ENCODE measurements at regions of chr7 and their contacts with region 1.

Region 1: DNA sequence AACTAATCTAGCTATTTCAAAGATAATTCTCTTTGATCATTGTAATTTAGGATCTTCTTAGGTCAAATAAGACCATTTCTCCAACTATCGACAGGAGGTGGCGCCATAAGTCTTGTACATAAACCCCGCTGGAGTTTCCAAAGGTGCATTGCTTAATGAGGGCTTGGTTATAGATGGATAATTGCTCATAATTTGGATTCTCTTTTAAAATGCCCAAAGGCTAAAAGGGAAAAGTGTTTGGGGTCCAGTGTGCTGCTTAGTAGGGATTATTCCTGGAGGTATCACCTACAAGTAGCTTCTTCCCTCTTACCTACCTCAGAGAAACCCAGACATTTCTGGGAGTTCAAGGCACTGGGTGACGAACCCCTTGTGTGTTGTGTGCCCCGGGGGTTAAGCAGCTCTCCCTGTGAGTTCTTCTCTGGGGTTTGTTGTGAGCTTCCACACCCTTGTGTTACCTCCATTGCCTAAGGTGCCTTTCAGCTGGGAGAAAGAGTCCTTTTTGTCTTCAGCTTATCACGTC is 75.2 kb downstream of the PAXIP1 start:
- DNase-seq: peak; percentile 90 to 94 (median 92)
- H3K4me3 ChIP-seq: peak overlapping the region; percentile 43 to 98 (median 86)
- H3K27ac ChIP-seq: peak overlapping the region; percentile 85 to 91
- H3K4me1 ChIP-seq: peaks cover 6 to 17% (median 14%) of the 10 kb centered on the region in 4 experiments
- H3K27me3 ChIP-seq: peaks cover 0 to 4% (median 2%) of the 10 kb centered on the region in 5 experiments

Region 2: DNA sequence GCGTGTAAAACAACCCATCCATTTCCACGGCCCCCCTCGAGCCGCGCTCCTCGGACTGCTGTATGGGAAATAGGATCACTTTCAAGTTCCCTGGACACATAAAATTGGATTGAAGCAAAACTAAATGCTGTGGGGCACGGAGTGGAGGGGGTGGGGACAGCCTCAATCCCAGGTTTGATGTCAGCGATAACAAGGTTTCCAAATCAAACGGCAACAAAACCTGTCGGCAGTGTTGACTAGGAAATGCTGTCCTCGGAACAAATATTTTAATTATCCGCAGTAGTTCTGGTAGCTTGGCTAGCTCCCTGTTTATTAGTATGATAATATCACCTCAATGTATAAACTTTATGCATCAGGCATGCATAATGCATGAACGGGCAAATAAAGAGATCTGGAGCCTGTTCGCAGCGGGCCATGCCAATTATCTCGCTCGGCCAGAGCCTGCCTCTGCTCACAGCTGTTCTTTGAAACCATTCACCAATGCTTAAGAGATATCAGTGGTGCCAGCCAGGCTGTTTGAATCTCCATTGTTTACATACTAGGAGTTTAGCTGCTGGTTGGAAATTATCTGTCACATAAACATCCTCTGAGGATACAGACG is 85.9 kb before region 1 on chr7:
- CTCF ChIA-PET with region 1: no interaction called
- POLR2A ChIA-PET with region 1: no interaction called
- DNase-seq: peak in 1 of 3 donors; percentile 24
- H3K4me3 ChIP-seq: no peak overlapping the region
- H3K27ac ChIP-seq: no peak overlapping the region
- H3K4me1 ChIP-seq: no peaks in the 10 kb centered on the region
- H3K27me3 ChIP-seq: peaks cover 2 to 26% (median 15%) of the 10 kb centered on the region in 5 experiments

Region 3: GRCh38 chr7:154892462-154892861 is 35.2 kb before region 1 on chr7:
- CTCF ChIA-PET with region 1: no interaction called
- POLR2A ChIA-PET with region 1: no interaction called
- DNase-seq: no peak
- H3K4me3 ChIP-seq: no peak overlapping the region
- H3K27ac ChIP-seq: no peak overlapping the region
- H3K4me1 ChIP-seq: no peaks in the 10 kb centered on the region
- H3K27me3 ChIP-seq: peaks cover 0 to 19% (median 4%) of the 10 kb centered on the region in 5 experiments

Region 4: GRCh38 chr7:154942691-154943090 is 15.0 kb after region 1 on chr7:
- CTCF ChIA-PET with region 1: interaction called, 14 read pairs
- POLR2A ChIA-PET with region 1: no interaction called
- DNase-seq: no peak
- H3K4me3 ChIP-seq: no peak overlapping the region
- H3K27ac ChIP-seq: no peak overlapping the region
- H3K4me1 ChIP-seq: no peaks in the 10 kb centered on the region
- H3K27me3 ChIP-seq: no peaks in the 10 kb centered on the region

Region 5: GRCh38 chr7:155000800-155001199 is 73.1 kb after region 1 on chr7:
- CTCF ChIA-PET with region 1: interaction called, 15 read pairs
- POLR2A ChIA-PET with region 1: no interaction called
- DNase-seq: no peak
- H3K4me3 ChIP-seq: no peak overlapping the region
- H3K27ac ChIP-seq: no peak overlapping the region
- H3K4me1 ChIP-seq: peaks cover 4 to 23% (median 13%) of the 10 kb centered on the region in 4 experiments
- H3K27me3 ChIP-seq: no peaks in the 10 kb centered on the region

Region 6: GRCh38 chr7:155344600-155345433 is 417.1 kb after region 1 on chr7:
- CTCF ChIA-PET with region 1: interaction called, 17 read pairs
- POLR2A ChIA-PET with region 1: no interaction called
- DNase-seq: peak; percentile 75 to 87 (median 86)
- H3K4me3 ChIP-seq: peak overlapping the region in 6 of 7 experiments; percentile 24 to 72 (median 56)
- H3K27ac ChIP-seq: no peak overlapping the region
- H3K4me1 ChIP-seq: peaks cover 0 to 10% (median 9%) of the 10 kb centered on the region in 4 experiments
- H3K27me3 ChIP-seq: peaks cover 0 to 23% (median 2%) of the 10 kb centered on the region in 5 experiments

Measured in common myeloid progenitor, CD34-positive (primary cell).